ENCODE measurements at regions of chr12 and their contacts with region 1.

Region 1: DNA sequence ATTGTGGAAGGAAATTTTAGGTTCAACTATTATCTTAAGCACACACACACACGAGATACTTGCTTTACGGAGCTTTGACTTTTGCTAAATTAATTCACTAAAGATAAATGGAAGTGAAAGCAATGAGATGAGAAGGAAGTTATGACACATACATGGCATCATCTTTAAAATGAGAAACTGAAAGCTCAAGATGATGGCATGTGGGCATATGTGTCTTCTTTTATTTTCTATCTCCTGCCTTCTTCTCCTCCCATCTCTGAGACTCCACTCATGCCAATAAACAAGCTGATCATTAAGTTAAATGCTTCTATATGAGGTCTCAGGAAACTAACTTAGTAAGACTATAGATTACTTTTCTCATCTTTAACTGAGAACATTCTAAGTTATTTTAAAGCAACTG is 216.7 kb downstream of the MED13L start:
- DNase-seq: peak; percentile 69
- H3K4me3 Mint-ChIP-seq: peak overlapping the region; percentile 81
- H3K27ac Mint-ChIP-seq: peak overlapping the region; percentile 91
- H3K4me1 Mint-ChIP-seq: peaks cover 22% of the 10 kb centered on the region
- H3K27me3 Mint-ChIP-seq: no peaks in the 10 kb centered on the region

Region 2: DNA sequence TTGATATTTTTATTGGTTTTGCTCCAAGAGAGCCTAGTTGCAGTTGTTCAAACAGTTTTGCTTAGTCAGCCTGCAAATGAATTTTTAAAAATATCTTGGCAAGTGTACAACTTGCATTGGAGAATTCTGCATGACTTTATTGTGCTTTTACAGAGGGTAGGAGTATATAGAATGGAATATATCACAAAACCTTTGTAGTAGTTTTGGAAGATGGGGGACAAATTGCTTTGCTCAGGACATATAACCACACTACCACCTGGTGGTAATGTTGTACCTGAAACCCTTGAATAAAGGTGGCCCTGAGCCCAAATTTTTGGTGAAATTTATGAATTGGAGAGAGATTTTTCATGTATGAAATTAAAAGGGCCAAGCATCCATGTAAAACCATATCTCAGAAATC is 428.5 kb before region 1 on chr12:
- intact Hi-C with region 1: no loop called
- DNase-seq: no peak
- H3K4me3 Mint-ChIP-seq: no peak overlapping the region
- H3K27ac Mint-ChIP-seq: no peak overlapping the region
- H3K4me1 Mint-ChIP-seq: no peaks in the 10 kb centered on the region
- H3K27me3 Mint-ChIP-seq: no peaks in the 10 kb centered on the region

Region 3: DNA sequence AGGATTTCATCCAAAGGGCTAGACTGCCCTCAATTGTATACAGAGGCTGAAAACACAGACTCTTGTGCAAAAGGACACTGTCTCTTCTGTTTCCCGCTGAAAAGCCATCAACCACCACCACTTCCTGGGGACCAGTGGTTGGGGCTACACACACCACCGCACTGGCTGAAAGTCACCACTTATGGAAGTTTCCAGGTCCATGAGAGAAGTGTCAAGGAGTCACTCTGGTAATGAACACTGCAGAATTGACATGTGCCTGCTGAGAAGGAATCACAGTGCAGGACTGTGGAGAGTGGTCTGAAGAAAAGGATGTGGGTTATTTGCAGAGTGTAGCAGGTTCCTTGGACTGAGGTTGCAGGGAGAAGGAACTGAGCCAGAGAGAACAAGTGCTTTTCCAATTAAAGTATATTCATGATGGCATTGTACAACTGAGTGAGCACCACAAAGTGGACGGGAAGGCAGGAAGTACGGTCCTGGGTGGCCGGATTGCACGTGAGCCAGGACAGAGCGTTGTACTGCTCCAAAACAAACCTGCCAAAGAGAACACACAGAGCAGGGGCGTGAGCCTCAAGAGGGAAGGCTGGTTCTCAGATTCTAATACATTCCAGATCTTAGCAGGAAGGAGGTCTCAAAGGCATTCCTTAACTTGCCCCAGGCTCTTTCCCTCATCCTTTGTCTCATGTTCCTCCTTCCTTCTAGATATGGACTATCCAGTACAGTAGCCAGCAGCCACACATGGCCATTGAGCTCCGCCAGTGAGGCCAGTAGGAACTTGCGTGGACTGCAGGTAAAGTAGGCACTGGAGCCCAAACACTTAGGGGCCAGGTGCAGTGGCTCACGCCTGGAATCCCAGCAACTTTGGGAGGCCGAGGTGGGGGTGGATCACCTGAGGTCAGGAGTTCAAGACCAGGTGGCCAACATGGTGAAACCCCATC is 99.6 kb before region 1 on chr12:
- intact Hi-C with region 1: no loop called
- DNase-seq: peak; percentile 73
- H3K4me3 Mint-ChIP-seq: peak overlapping the region; percentile 18
- H3K27ac Mint-ChIP-seq: peak overlapping the region; percentile 70
- H3K4me1 Mint-ChIP-seq: peaks cover 45% of the 10 kb centered on the region
- H3K27me3 Mint-ChIP-seq: no peaks in the 10 kb centered on the region

Region 4: DNA sequence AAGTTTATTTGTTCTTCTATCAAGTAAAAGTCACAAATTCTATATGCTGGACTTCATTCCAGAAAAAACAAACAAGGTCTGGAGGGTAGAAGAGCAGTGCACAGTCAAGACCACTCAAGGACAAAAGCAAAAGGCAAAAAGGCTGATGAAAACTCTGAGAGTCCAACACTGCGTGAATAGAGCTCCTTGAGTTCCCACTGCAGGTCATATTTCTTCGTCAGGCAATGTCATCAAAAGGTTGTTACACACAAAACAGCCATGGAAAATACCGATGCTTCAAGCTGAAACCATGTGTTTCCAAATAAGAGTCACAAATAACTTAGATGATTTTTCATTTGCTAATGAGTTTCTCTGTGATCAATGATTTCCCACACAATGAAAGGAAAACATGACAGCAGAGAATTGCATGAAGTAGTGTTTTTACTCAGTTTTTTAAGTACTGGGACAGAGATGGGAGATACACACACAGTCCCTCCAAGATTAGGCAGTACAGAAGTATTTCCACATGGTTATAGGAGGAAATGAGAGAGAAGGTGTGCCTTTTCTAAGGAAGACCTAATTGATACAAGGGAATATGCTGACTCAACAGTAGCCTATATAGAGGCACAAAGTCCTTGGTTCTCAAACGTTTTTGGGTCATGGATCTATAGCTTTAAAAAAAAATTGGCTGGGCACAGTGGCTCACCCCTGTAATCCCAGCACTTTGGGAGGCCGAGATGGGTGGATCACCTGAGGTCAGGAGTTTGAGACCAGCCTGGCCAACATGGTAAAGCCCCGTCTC is 39.1 kb after region 1 on chr12:
- intact Hi-C with region 1: loop called (anchors 5 kb)
- DNase-seq: no peak
- H3K4me3 Mint-ChIP-seq: no peak overlapping the region
- H3K27ac Mint-ChIP-seq: peak overlapping the region; percentile 53
- H3K4me1 Mint-ChIP-seq: peaks cover 23% of the 10 kb centered on the region
- H3K27me3 Mint-ChIP-seq: no peaks in the 10 kb centered on the region

Region 5: GRCh38 chr12:116194935-116195431 is 134.2 kb after region 1 on chr12:
- intact Hi-C with region 1: no loop called
- DNase-seq: peak; percentile 87
- H3K4me3 Mint-ChIP-seq: peak overlapping the region; percentile 65
- H3K27ac Mint-ChIP-seq: peak overlapping the region; percentile 82
- H3K4me1 Mint-ChIP-seq: peaks cover 36% of the 10 kb centered on the region
- H3K27me3 Mint-ChIP-seq: no peaks in the 10 kb centered on the region